ENCODE measurements at regions of chr14 and their contacts with region 1.

Region 1: DNA sequence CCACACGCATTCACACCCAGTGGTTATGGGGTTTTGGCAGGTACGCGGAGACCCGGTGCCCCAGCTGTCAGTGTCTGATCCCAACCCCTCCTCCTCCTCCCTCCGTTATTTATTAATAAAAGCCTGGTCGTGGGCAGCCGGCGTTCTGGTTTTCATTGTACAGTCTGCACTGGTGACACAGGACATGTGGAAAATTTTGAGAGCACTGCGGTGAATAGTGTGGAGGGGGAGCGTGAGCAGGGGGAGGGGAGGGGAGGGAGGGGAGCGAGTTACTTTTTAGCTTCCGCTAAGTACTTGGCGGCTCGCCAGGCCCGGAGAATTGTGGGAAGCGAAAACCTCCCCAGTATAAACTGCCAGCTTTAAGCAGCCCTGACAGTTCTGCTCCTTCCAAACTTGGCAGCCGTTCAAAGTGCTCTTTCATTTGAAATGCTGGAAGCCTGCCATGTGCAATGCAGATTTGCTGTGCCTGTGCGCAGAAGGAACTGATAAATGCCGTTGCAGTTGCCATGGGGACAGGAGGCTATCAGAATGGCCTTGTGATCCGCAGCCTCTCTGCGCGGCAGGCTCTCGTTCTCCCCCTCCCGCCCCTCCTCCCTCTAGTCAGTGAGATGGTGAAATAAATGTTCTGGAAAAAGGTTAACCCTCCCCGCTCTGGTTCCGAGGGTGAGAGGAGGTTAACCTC is 11.7 kb upstream of the IRF2BPL start:
- DNase-seq: peak; percentile 85
- ATAC-seq: peak; percentile 70
- H3K4me3 Mint-ChIP-seq: peak overlapping the region; percentile 80
- H3K27ac Mint-ChIP-seq: peak overlapping the region; percentile 96
- H3K4me1 Mint-ChIP-seq: peaks cover 89% of the 10 kb centered on the region
- H3K27me3 Mint-ChIP-seq: no peaks in the 10 kb centered on the region
- CTCF ChIP-seq: no peak

Region 2: GRCh38 chr14:76812211-76813044 is 227.8 kb before region 1 on chr14 and contains the start of gene ANGEL1:
- CTCF ChIA-PET with region 1: no interaction called
- POLR2A ChIA-PET with region 1: no interaction called
- intact Hi-C with region 1: loop called (anchors 5 kb)
- DNase-seq: peak; percentile 97
- ATAC-seq: peak; percentile 95
- H3K4me3 Mint-ChIP-seq: peak within 1 kb of the TSS; percentile 95
- H3K27ac Mint-ChIP-seq: peak within 1 kb of the TSS; percentile 91
- H3K4me1 Mint-ChIP-seq: peaks cover 25% of the 10 kb centered on the region
- H3K27me3 Mint-ChIP-seq: no peaks in the 10 kb centered on the region
- CTCF ChIP-seq: no peak
- total RNA-seq, gene ANGEL1: 14.9 and 17.9 TPM in 2 replicates

Region 3: DNA sequence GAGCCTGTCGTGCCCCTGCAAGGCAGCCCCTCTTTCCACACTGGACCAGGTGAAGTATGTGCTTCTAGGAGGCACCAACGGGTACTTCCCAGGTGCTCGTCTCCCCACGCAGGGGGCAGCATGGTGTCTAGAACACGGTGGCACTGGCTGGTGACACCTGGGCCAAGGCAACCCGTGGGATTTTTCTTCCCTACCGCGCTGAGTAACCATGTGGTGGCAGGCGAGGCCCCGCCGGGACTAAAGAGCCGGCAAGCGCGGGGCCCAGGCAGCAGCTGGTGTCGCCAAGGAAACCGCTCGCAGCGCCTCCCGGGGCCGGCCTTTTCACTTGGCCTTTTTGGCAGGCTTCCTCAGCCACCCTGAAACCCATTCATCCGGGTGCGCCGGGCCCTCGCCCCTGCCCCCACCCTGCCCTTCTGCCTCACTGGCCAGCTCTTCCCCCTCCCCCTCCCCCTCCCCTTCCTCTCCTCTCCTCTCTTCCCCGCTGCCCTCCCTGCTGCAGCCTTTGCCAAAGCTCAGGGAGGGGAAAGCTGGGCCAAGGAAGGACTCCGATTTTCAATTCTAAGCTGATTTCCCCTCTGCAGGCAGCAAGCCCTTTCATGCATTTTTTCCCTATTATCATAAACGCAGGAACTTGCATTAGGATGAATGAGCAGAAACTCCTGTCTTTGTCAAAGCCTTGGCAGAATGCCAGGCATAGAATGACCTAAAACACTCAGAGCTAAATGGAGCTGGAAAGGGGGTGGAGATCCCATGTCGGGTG is 92.9 kb before region 1 on chr14:
- CTCF ChIA-PET with region 1: interaction called, 7 read pairs
- POLR2A ChIA-PET with region 1: interaction called, 14 read pairs
- intact Hi-C with region 1: no loop called
- DNase-seq: peak; percentile 69
- ATAC-seq: peak; percentile 93
- H3K4me3 Mint-ChIP-seq: peak overlapping the region; percentile 19
- H3K27ac Mint-ChIP-seq: no peak overlapping the region
- H3K4me1 Mint-ChIP-seq: peaks cover 19% of the 10 kb centered on the region
- H3K27me3 Mint-ChIP-seq: no peaks in the 10 kb centered on the region
- CTCF ChIP-seq: no peak

Region 4: DNA sequence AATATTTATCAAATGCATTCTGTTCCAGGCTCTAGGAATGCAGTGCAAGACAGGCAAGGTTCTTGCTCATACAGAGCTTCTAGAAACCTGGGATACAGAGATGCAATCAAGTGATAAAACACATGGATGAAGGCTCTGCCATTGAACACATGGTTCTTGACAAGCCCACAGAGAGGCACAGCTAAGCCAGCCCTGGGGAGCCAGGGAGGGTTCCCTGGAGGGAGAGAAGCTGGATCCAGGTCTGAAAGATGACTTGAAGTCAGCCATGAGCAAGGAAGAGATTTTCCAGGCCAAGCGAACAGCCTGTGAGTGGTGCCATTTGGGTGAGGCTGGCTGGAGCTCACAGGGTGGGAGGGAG is 77.9 kb before region 1 on chr14:
- CTCF ChIA-PET with region 1: interaction called, 7 read pairs
- POLR2A ChIA-PET with region 1: interaction called, 48 read pairs
- intact Hi-C with region 1: loop called (anchors 1 kb)
- DNase-seq: no peak
- ATAC-seq: no peak
- H3K4me3 Mint-ChIP-seq: peak overlapping the region; percentile 84
- H3K27ac Mint-ChIP-seq: peak overlapping the region; percentile 94
- H3K4me1 Mint-ChIP-seq: peaks cover 78% of the 10 kb centered on the region
- H3K27me3 Mint-ChIP-seq: no peaks in the 10 kb centered on the region
- CTCF ChIP-seq: no peak

Region 5: DNA sequence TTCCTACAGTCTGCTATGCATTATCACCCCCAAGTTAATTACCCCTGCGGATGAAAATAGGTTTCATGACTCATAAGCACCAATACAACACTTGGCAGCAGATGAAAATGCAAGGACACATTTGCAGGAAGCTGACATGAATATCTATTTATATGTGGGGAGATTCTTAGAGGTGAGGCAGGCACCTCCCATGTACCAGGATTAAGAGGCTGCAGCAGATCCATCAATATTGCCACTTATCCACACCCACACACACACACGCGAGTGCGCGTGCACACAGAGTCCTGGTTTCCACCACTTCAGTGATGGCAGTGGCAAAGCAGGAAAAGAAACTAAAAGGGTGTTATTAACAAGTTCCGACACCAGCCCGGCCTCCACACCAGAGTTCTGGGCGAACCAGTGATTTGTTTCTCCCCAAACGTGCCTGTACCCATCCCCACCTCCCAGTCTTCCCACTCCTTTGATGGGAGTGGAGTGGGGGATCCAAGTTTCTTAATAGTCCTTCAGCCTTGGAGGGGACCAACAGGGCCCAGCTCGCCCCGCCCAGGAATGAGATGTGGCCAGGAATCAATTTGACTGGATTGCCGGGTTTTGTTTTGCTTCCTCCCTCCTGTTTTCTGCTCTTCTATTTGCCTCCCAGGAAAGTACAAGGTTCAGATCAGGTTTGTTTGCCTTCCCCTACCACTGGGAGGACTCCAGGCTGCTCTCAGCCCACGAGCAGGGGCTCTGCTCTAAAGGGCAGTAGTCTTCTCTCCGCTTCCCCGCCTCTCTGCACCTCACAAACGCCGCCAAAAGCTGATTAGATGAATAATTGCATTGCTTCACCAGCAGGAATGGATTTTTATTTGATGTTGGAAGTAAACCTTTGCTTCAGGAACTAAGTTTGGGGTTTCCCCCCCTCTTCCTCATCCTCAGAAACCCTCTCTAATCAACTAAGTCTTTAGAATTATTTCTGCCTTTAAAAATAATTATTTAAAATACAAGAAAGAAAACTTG is 16.9 kb before region 1 on chr14:
- CTCF ChIA-PET with region 1: interaction called, 10 read pairs
- POLR2A ChIA-PET with region 1: interaction called, 140 read pairs
- intact Hi-C with region 1: loop called (anchors 1 kb)
- DNase-seq: no peak
- ATAC-seq: no peak
- H3K4me3 Mint-ChIP-seq: no peak overlapping the region
- H3K27ac Mint-ChIP-seq: peak overlapping the region; percentile 4
- H3K4me1 Mint-ChIP-seq: peaks cover 36% of the 10 kb centered on the region
- H3K27me3 Mint-ChIP-seq: no peaks in the 10 kb centered on the region
- CTCF ChIP-seq: no peak

Region 6: DNA sequence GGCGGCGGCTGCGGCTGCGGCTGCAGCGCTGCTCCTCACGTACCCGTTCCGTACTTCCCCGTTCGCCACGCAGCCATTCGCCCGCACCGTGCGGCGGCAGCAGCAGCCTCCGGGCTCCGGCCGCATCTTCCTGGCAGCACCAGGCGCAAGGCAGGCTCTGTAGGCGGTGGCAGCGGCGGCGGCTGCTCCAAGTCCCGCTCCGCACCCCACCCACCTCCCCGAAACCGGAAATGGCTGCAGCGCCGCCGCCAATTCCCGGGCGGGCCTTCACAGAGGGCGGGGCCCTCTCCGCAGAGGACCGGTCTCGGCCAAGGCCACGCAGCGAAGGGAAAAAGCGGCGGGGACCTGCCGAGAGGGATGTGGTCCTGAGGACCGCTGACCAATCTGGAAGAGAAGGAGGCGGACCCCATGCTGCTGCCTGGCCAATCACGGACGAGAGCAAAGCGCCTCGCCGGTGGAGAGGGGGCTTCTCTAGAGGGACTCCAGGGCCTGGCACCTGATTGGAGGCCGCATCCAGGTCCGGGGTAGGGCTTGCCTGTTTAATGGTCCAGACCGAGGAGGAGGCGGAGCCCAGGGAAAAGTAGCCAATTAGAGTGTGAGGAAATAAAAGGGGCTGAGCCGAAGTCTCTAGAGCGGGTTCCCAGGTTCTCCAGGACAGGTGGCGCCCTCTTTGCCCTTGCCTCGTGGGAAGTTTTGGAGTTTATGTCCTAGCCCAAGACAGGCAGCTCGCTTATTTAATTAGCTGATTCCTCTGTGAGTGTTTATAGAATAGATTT is 576.4 kb after region 1 on chr14 and contains the start of gene SPTLC2:
- CTCF ChIA-PET with region 1: no interaction called
- POLR2A ChIA-PET with region 1: no interaction called
- intact Hi-C with region 1: loop called (anchors 10 kb)
- DNase-seq: peak; percentile 84
- ATAC-seq: peak; percentile 94
- H3K4me3 Mint-ChIP-seq: peak within 1 kb of the TSS; percentile 95
- H3K27ac Mint-ChIP-seq: peak within 1 kb of the TSS; percentile 86
- H3K4me1 Mint-ChIP-seq: peaks cover 42% of the 10 kb centered on the region
- H3K27me3 Mint-ChIP-seq: no peaks in the 10 kb centered on the region
- CTCF ChIP-seq: no peak
- total RNA-seq, gene SPTLC2: 34.1 and 43.8 TPM in 2 replicates

Measured in activated B cell treated with CpG ODN at 0.5 μM for 24 hours (primary cell).